Endothelial cell of umbilical vein (primary cell): ENCODE measurements at regions of chr14 and their contacts with region 1.

Region 1: DNA sequence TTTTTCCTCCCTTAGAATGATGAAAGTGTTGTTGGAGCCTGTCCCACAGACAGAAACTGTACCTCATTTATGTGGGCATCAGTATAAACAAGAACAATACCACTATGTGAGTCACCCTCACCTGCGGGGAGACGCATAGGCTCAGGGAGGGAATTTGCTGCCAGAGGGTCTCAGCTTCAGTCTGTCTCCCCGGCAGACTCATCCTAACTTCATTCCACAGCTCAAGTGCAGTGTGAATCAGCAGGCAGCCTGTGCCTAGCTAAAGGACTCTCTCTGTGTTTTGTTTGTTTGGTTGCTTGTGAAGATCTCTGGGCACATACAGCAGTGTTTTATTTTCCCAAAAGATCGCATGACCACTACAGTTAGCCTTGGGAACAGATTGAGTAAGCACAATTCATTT is 98.9 kb downstream of the PRKCH start:
- DNase-seq: peak; percentile 43
- H3K4me3 ChIP-seq: no peak overlapping the region
- H3K27ac ChIP-seq: no peak overlapping the region
- H3K4me1 ChIP-seq: peaks cover 46% of the 10 kb centered on the region
- H3K27me3 ChIP-seq: no peaks in the 10 kb centered on the region
- CTCF ChIP-seq: no peak
- POLR2A ChIP-seq: no peak

Region 2: GRCh38 chr14:61438860-61439684 is 18.7 kb after region 1 on chr14:
- CTCF ChIA-PET with region 1: interaction called, 21 read pairs
- POLR2A ChIA-PET with region 1: no interaction called
- dilution Hi-C with region 1: no loop called
- intact Hi-C with region 1: no loop called
- DNase-seq: peak; percentile 91
- H3K4me3 ChIP-seq: peak overlapping the region in 1 of 3 experiments; percentile 0
- H3K27ac ChIP-seq: peak overlapping the region; percentile 39
- H3K4me1 ChIP-seq: peaks cover 43% of the 10 kb centered on the region
- H3K27me3 ChIP-seq: no peaks in the 10 kb centered on the region
- CTCF ChIP-seq: no peak
- POLR2A ChIP-seq: peak; percentile 25

Region 3: GRCh38 chr14:61456720-61457119 is 36.4 kb after region 1 on chr14:
- CTCF ChIA-PET with region 1: no interaction called
- POLR2A ChIA-PET with region 1: no interaction called
- dilution Hi-C with region 1: no loop called
- intact Hi-C with region 1: loop called (anchors 1 kb)
- DNase-seq: peak; percentile 72
- H3K4me3 ChIP-seq: no peak overlapping the region
- H3K27ac ChIP-seq: no peak overlapping the region
- H3K4me1 ChIP-seq: peaks cover 22% of the 10 kb centered on the region
- H3K27me3 ChIP-seq: no peaks in the 10 kb centered on the region
- CTCF ChIP-seq: peak; percentile 75 to 79
- POLR2A ChIP-seq: no peak

Region 4: GRCh38 chr14:61553725-61554641 is 133.7 kb after region 1 on chr14:
- CTCF ChIA-PET with region 1: no interaction called
- POLR2A ChIA-PET with region 1: no interaction called
- dilution Hi-C with region 1: no loop called
- intact Hi-C with region 1: no loop called
- DNase-seq: no peak
- H3K4me3 ChIP-seq: no peak overlapping the region
- H3K27ac ChIP-seq: no peak overlapping the region
- H3K4me1 ChIP-seq: no peaks in the 10 kb centered on the region
- H3K27me3 ChIP-seq: no peaks in the 10 kb centered on the region
- CTCF ChIP-seq: no peak
- POLR2A ChIP-seq: no peak